Posterior vena cava (tissue), 2 donors: ENCODE measurements at regions of chr1 and their contacts with region 1.

Region 1: DNA sequence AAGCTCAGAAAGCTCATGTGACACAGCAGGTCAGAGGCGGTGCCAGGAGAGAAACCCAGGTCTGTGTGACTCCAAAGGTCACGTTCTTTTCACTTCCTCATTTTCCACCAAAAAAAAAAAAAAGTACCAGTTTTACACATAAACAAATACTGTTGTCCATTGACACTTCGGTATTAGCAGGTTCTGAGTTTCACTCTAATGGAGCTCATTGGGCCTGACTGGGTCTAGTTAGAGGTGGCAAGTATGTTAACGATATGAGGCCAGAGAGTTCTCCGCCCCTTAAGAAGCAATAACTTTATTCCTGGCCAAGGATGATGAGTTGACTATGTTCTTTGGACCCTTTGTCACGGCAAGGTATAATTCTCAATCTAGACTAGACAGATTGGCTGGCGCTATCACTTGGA is 30.0 kb upstream of the SDE2 start:
- DNase-seq: no peak

Region 2: DNA sequence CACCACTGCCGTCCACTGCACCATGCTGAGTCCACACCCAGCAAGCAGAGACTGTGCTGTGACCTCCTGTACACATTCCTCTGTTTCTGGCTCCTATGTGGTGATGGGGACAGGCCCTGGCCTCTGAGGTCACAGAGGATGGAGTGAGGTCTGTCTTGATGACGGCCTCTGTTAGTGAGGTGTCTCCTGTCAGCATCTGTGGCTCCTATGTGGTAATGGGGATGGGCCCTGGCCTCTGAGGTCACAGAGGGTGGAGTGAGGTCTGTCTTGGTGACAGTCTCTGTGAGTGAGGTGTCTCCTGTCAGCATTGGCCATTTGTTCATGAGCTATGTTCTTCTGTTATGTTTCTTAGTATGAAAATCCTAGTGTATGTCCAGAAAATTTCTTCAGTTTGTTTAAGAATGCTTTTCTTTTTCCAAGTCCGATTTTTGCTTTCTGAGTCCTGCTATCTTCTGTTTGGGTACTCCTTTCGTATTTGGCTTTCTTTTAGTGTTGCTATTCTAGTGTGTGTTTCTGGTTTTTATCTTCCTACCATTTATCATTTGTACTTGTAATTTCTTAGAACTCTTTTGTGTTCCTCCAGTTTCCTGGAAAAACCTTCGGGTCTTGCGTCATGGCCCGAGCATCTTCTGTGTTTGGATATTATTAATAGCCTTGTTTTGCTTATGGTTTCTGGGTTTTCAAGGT is 1719.5 kb after region 1 on chr1:
- intact Hi-C with region 1: loop called in 1 of 2 experiments (anchors 10 kb)
- DNase-seq: no peak